CD4-positive, alpha-beta T cell (primary cell): ENCODE measurements at regions of chr10 and their contacts with region 1.

Region 1: GRCh38 chr10:46325023-46325422 is 38.2 kb downstream of the ANTXRL start:
- DNase-seq: peak in 2 of 14 experiments; percentile 24 to 27
- ATAC-seq: no peak
- H3K4me3 ChIP-seq: no peak overlapping the region
- H3K4me3 Mint-ChIP-seq: no peak overlapping the region
- H3K27ac ChIP-seq: no peak overlapping the region
- H3K27ac Mint-ChIP-seq: no peak overlapping the region
- H3K4me1 ChIP-seq: no peaks in the 10 kb centered on the region
- H3K4me1 Mint-ChIP-seq: no peaks in the 10 kb centered on the region
- H3K27me3 ChIP-seq: no peaks in the 10 kb centered on the region
- H3K27me3 Mint-ChIP-seq: no peaks in the 10 kb centered on the region
- CTCF ChIP-seq: peak; percentile 48

Region 2: GRCh38 chr10:46228563-46229071 is 96.4 kb before region 1 on chr10:
- CTCF ChIA-PET with region 1: no interaction called
- POLR2A ChIA-PET with region 1: no interaction called
- intact Hi-C with region 1: loop called (anchors 1 to 5 kb)
- DNase-seq: peak; percentile 31 to 68 (median 48)
- ATAC-seq: peak; percentile 89
- H3K4me3 ChIP-seq: no peak overlapping the region
- H3K4me3 Mint-ChIP-seq: no peak overlapping the region
- H3K27ac ChIP-seq: no peak overlapping the region
- H3K27ac Mint-ChIP-seq: no peak overlapping the region
- H3K4me1 ChIP-seq: peaks cover 6% of the 10 kb centered on the region
- H3K4me1 Mint-ChIP-seq: peaks cover 41% of the 10 kb centered on the region
- H3K27me3 ChIP-seq: no peaks in the 10 kb centered on the region
- H3K27me3 Mint-ChIP-seq: no peaks in the 10 kb centered on the region
- CTCF ChIP-seq: peak; percentile 56